HEK293T (cell line): ENCODE measurements at regions of chr16 and their contacts with region 1.

Region 1: DNA sequence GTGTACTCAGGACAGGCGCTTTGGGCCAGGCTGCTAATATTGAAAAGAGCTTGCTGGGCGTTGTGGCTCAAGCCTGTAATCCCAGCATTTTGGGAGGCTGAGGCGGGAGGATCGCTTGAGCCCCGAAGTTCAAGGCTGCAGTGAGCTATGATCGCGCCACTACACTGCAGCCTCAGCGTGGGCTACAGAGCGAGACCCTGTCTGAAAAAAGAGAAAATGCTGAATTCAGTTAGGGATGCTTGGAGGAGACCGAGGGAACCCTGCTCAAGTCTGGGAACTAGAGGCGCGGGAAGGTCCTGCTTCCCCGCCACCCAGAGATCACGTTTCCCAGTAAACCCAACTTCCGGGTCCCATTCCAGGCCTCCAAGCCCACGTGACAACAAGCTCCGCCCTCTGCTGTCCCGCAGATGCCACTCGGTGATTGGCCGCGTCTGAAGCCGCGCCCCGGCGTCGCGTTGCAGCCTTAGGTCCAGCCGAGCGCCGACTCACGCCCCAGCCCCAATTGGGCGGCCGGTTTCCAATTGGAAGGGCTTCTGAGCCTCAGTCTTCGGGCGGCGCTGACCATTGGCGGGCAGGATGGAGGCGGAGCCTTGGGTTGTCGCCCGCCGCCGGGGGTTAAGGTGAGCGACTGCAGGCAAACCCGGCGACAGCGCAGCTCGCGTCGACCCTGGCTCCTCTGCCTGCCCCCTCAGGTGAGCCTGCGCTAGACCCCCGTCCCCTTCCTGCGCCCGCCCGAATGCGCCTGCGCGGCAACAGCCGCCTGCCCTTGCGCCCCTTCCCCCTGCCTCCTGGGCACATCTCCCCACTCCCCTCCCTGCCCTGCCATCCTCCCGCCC is at the start of gene PHKG2:
- DNase-seq: peak; percentile 100

Region 2: DNA sequence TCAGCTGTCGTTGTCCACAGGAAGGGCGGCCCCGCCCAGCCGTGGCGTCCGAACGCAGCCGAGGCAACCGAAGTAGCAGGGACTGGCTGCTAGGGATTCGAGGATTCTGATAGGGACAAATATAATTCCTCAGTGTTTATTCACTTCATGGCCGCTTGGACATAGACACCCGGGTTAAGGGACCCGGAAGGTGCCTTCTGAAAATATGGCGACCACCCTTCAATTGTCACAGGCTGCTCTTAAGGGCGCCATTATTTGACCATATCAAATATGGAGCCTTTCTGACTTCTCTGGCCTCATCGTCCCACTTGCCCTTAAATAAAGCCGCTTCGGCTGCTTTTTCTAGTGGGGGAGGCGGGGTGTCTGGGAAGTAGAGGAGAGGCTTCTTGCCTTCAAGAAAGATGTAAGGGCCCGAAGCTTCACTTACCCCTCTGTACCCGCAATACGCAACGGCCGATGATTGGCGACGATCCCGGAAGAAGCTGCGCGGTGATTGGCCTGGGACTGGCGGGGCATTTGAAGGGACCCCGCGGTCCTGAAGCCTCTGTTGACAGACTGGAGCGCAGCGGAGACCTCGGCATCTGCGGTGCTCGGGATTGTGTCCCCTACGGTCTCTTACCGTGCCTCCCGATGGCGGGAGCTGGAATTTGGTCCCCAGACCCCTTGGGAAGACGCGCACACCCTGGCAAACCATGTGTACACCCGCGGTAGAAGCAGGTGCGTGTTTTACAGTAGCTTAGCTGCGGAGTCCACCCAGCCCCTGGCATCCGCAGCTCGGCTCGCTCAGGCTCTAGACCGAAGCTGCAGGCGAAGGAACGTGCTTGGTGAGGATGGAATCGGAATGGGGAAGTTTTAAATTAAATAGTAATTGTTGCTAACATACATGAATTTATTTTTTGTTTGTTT is 176.1 kb before region 1 on chr16 and contains the start of gene ZNF688:
- CTCF ChIA-PET with region 1: no interaction called
- POLR2A ChIA-PET with region 1: no interaction called
- DNase-seq: peak; percentile 96

Region 3: GRCh38 chr16:30592871-30593270 is 155.1 kb before region 1 on chr16:
- CTCF ChIA-PET with region 1: no interaction called
- POLR2A ChIA-PET with region 1: no interaction called
- DNase-seq: no peak

Region 4: GRCh38 chr16:30710971-30711370 is 37.0 kb before region 1 on chr16:
- CTCF ChIA-PET with region 1: no interaction called
- POLR2A ChIA-PET with region 1: interaction called, 12 read pairs
- DNase-seq: no peak

Region 5: GRCh38 chr16:30761928-30762810 is 14.2 kb after region 1 on chr16 and contains the starts of genes CFAP119 and RNF40:
- CTCF ChIA-PET with region 1: no interaction called
- POLR2A ChIA-PET with region 1: interaction called, 52 read pairs
- DNase-seq: peak; percentile 100

Region 6: GRCh38 chr16:30775392-30776188 is 27.6 kb after region 1 on chr16:
- CTCF ChIA-PET with region 1: no interaction called
- POLR2A ChIA-PET with region 1: interaction called, 33 read pairs
- DNase-seq: peak; percentile 97

Region 7: DNA sequence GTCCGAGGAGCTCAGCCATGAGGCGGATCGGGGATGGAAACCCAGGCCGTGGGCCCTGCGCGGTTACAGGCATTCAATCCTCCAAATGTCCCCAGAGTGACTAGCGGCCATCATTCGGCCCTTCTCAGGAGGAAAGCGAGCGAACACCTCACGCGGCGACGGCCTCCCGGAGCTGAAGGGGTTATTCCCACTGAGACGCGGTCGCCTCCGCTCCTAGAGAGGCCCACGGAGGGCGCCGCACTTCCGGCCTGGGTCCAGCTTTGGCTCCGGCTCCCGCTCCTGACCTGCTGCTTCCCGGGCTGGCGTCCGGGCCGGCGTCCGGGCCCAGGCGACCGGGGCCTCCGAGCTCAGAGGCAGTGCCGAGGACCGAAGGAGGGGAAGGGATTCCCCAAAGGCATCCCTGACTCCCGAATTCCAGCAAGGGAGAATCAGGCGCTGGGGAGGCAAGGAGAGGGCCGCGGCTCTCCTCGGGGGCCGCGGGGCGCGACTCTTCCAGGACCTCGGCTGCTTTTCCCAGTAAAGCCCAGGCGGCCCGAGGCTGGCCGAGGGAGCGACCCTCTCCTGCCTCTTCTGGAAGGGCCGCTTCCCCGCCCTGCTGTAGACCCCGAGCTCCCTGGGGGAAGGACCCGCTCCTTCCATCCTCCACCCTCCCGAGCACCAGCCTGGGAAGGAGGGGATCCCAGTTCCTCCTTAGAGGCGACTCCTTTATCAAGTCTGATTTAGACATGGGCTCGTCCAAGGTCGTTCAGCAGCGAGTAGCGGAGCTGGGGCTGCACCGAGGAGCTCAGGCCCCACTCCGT is 57.6 kb after region 1 on chr16:
- CTCF ChIA-PET with region 1: no interaction called
- POLR2A ChIA-PET with region 1: interaction called, 17 read pairs
- DNase-seq: peak; percentile 95